ENCODE measurements at regions of chr17 and their contacts with region 1.

Region 1: DNA sequence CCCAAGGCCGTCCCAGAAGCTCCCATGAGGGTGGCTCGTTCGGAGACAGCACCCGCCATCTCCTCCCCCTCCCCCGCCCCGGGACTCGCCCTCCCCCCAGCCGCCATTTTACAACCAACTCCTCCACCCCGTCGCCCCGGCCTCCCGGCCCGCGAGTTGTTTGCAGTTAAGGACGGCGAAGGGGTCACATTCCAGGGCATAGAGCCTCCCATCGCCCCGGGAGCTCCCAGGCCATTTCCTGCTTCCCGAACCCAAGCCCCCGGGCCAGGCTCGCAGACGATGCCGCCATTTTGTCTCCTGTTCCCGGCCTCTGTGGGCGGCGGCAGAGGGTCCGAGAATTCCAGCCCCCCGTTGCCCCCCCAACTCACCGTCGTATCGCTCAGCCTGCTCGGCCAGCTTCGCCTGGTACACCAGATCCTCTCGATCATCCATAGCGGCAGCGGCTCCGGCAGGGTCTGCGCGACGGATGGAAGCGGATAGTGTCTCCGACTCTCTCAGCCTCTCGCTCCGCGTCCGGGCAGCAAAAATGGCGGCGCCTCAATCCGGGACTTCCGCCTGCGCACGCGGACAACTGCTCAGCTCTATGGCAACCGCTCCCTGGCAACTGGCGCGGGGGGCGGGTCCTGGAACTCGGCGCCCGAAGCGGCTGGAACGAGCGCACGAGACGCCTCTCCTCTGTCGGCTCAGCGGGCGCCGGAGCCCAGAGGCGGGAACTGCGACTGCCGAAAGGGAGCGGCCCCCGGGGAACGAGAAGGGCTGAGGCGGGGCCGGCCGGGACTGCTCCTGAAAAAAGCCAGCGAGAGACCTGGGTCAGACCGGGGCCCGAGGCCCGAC is at the start of gene YWHAE:
- DNase-seq: peak; percentile 97
- ATAC-seq: peak; percentile 95
- H3K4me3 Mint-ChIP-seq: peak within 1 kb of the TSS; percentile 94
- H3K27ac Mint-ChIP-seq: peak within 1 kb of the TSS; percentile 96
- H3K4me1 Mint-ChIP-seq: peaks cover 24% of the 10 kb centered on the region
- H3K27me3 Mint-ChIP-seq: no peaks in the 10 kb centered on the region
- total RNA-seq, gene YWHAE: 393 to 414 TPM

Region 2: DNA sequence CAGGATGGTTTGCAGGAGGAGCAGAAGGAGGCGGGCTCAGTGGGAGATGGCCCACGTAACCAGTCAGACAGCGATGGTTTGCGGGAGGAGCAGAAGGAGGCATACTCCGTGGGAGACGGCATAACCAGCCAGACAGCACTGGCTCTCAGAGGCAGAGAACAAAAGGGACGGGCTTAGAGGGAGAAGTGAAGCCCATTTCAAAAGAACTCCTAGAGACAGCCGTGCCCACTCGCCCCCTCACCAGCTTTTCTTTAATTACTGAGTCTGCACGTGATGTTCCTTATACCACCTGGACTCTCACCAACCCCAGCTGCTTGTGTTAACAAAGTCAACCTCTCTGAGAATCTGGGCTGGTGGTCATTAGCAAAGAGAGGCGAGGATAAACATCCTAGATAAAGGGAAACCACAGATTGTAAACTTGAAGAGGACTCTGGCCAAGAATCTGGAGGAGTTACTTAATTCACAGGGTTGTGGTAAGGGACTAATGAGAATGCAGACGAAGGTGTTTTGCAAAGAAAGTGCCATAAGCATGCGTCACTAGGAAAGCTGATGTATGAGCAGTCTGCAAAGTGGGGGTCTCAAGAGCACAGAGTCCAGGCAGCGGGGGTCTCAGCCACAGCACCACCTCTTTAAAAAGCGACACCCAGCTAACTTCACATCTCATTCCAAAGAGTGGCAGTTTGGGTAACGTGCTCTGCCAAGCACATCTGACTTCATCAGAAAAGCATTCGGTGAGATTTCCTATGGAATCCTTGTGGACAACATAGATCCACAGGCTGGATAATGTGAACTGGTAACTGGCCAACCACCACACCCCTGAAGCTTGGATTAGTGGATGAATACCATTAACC is 472.1 kb before region 1 on chr17:
- CTCF ChIA-PET with region 1: no interaction called
- POLR2A ChIA-PET with region 1: no interaction called
- DNase-seq: no peak
- ATAC-seq: no peak
- H3K4me3 Mint-ChIP-seq: no peak overlapping the region
- H3K27ac Mint-ChIP-seq: no peak overlapping the region
- H3K4me1 Mint-ChIP-seq: no peaks in the 10 kb centered on the region
- H3K27me3 Mint-ChIP-seq: no peaks in the 10 kb centered on the region

Region 3: GRCh38 chr17:1347589-1348323 is 52.1 kb before region 1 on chr17:
- CTCF ChIA-PET with region 1: no interaction called
- POLR2A ChIA-PET with region 1: no interaction called
- DNase-seq: no peak
- ATAC-seq: no peak
- H3K4me3 Mint-ChIP-seq: no peak overlapping the region
- H3K27ac Mint-ChIP-seq: peak overlapping the region; percentile 69
- H3K4me1 Mint-ChIP-seq: peaks cover 8% of the 10 kb centered on the region
- H3K27me3 Mint-ChIP-seq: no peaks in the 10 kb centered on the region

Region 4: GRCh38 chr17:1413281-1413791 is 13.4 kb after region 1 on chr17:
- CTCF ChIA-PET with region 1: no interaction called
- POLR2A ChIA-PET with region 1: interaction called, 10 read pairs
- DNase-seq: no peak
- ATAC-seq: no peak
- H3K4me3 Mint-ChIP-seq: no peak overlapping the region
- H3K27ac Mint-ChIP-seq: no peak overlapping the region
- H3K4me1 Mint-ChIP-seq: no peaks in the 10 kb centered on the region
- H3K27me3 Mint-ChIP-seq: no peaks in the 10 kb centered on the region

Region 5: GRCh38 chr17:1628856-1629646 is 229.2 kb after region 1 on chr17:
- CTCF ChIA-PET with region 1: no interaction called
- POLR2A ChIA-PET with region 1: no interaction called
- DNase-seq: peak; percentile 94
- ATAC-seq: peak; percentile 85
- H3K4me3 Mint-ChIP-seq: peak overlapping the region; percentile 85
- H3K27ac Mint-ChIP-seq: peak overlapping the region; percentile 78
- H3K4me1 Mint-ChIP-seq: peaks cover 28% of the 10 kb centered on the region
- H3K27me3 Mint-ChIP-seq: peaks cover 22% of the 10 kb centered on the region

Measured in activated CD8-positive, alpha-beta T cell treated with anti-CD3 and anti-CD28 coated beads, Interleukin-2, amount 10 ng/mL, durations not matched to agents 7 days and 5 days (primary cell).